Pancreas (tissue), 10 donors: ENCODE measurements at regions of chr2 and their contacts with region 1.

Region 1: DNA sequence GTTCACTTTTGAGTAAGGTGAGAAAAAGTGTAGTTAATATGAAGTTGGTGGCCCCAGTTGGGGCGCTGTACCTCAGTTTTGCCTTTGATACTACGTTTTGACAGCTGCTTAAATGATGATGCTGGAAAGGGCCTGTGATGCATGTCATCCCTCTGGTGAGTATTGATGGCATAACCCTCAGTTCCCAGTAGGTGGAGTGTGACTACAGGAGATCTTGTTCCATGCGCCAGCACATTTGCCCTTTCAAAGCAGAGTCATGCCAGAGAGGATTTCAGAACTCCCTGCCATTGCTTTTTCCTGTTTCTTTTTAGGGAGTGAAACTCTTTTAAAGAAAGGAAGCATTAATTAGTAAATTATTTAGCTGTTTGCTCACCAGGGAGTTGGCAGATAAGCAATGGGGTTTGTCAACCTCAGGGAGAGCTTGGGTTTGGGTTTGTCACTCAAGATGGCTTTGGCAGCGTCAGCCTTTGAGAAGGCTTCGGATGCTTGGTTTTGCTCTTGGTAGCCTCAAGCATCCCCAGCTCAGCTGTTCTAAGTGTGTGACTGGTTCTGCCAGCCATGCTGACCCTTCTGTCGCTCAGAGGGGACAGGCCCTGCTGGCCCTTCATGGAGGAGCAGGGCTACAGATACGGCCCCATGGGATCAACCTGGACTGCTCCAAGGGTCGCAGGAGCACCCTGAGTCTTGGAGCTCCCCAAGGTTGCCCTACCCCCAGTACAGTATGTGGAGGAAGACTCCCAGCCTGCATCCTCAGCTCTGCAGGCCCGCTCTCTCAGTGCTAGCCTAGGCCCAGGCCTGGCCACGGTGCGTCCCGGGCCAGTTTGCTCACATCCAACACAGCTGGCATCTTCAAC is 29.1 kb downstream of the ARMC9 start:
- DNase-seq: peak in 3 of 6 donors; percentile 48 to 70 (median 59)
- ATAC-seq: peak; percentile 94 to 100 (median 99)
- H3K4me3 ChIP-seq: no peak overlapping the region
- H3K27ac ChIP-seq: no peak overlapping the region
- H3K4me1 ChIP-seq: no peaks in the 10 kb centered on the region
- H3K27me3 ChIP-seq: no peaks in the 10 kb centered on the region
- CTCF ChIP-seq: peak; percentile 31 to 72 (median 69)

Region 2: DNA sequence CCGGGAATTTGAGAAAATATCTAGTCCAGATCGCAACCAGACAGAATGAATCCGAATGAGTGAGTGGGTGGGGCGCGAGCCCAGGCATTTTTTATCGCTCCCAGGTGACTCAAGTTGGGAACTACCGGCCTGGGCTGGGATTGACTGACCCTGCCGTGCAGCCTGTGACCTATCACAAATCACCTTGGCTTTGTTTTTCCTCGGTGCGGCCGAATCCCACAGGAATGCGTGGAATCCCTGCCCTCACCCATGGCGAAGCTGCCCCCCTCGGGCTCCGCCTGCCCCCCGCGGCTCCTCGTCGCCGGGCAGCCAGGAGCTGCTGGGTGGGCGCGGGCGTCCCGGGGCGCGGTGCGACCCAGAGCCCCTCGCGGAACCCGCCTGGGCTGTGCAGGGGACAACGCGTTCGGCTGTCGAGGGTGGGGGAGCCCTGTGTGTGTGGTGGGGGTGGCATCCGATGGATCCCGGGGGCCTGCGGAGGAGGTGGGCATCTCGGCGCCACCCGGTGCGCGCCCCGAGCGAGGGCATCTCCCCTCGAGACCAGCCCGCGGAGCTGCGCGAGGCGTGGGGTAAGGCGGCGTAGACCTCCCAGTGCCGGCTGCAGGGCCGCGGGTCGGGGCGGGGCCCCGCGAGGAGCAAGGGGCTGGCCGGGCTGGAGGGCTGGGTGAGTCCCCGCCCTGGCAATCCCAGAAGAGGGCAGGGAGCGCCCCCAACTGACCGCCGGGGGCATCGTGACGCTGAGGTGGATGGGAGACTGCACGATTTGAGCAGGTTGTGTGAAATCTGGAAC is 184.5 kb after region 1 on chr2:
- intact Hi-C with region 1: loop called in 2 of 3 experiments (anchors 5 to 10 kb)
- DNase-seq: peak; percentile 83 to 97 (median 92)
- ATAC-seq: peak; percentile 94 to 98 (median 96)
- H3K4me3 ChIP-seq: peak overlapping the region; percentile 33 to 67 (median 41)
- H3K27ac ChIP-seq: peak overlapping the region; percentile 62 to 94 (median 87)
- H3K4me1 ChIP-seq: peaks cover 0 to 19% (median 9%) of the 10 kb centered on the region in 3 donors
- H3K27me3 ChIP-seq: no peaks in the 10 kb centered on the region
- CTCF ChIP-seq: peak; percentile 81 to 92 (median 86)

Region 3: GRCh38 chr2:231452799-231453508 is 225.4 kb after region 1 on chr2:
- intact Hi-C with region 1: loop called in 2 of 3 experiments (anchors 5 kb)
- DNase-seq: peak in 1 of 6 donors; percentile 48
- ATAC-seq: peak; percentile 28 to 47 (median 32)
- H3K4me3 ChIP-seq: no peak overlapping the region
- H3K27ac ChIP-seq: no peak overlapping the region
- H3K4me1 ChIP-seq: no peaks in the 10 kb centered on the region
- H3K27me3 ChIP-seq: no peaks in the 10 kb centered on the region
- CTCF ChIP-seq: no peak